ENCODE measurements at regions of chr19 and their contacts with region 1.

Region 1: DNA sequence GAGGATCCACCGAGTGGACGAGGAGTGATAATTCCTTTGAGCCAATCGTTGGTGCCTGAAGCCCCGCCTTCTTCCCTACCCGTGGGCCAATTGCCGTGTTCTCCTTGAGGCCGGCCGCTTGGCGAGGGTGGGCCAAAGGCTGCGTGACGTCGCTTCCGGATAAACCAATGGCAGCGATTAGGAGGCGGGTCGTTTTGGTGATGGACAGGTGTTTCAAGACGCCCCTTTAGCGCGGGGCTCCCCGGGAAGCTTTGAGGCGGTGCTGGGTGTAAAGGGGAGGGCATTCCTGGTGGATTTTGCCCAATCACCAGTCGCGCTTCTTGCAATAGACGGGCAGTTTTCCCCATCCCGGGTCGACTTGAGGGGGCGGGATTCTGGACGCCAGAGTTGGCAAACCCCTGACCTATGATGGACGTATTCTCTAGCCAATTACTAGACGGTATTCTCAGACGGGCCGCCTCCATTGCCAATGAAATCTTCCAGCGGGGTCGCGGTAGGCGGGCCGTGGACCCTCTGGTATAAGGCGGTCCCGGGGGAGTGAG is 310 bp upstream of the PRMT1 start:
- DNase-seq: peak; percentile 100
- ATAC-seq: peak; percentile 79
- H3K4me3 ChIP-seq: peak overlapping the region; percentile 77
- H3K27ac ChIP-seq: peak overlapping the region; percentile 91
- H3K4me1 ChIP-seq: peaks cover 16% of the 10 kb centered on the region
- H3K27me3 ChIP-seq: no peaks in the 10 kb centered on the region
- CTCF ChIP-seq: no peak
- POLR2A ChIP-seq: no peak
- RAD21 ChIP-seq: no peak

Region 2: GRCh38 chr19:49502866-49503581 is 173.7 kb before region 1 on chr19:
- CTCF ChIA-PET with region 1: no interaction called
- POLR2A ChIA-PET with region 1: no interaction called
- dilution Hi-C with region 1: no loop called
- in situ Hi-C with region 1: no loop called
- intact Hi-C with region 1: loop called (anchors 1 kb)
- DNase-seq: peak; percentile 81
- ATAC-seq: peak; percentile 69
- H3K4me3 ChIP-seq: no peak overlapping the region
- H3K27ac ChIP-seq: peak overlapping the region; percentile 33; the same call in 1 of the 2 replicates
- H3K4me1 ChIP-seq: peaks cover 3% of the 10 kb centered on the region; the same call in 1 of the 2 replicates
- H3K27me3 ChIP-seq: no peaks in the 10 kb centered on the region
- CTCF ChIP-seq: peak; percentile 57
- POLR2A ChIP-seq: no peak
- RAD21 ChIP-seq: peak; percentile 65

Region 3: GRCh38 chr19:49570138-49570856 is 106.5 kb before region 1 on chr19:
- CTCF ChIA-PET with region 1: interaction called, 8 read pairs
- POLR2A ChIA-PET with region 1: no interaction called
- dilution Hi-C with region 1: no loop called
- in situ Hi-C with region 1: no loop called
- intact Hi-C with region 1: loop called (anchors 5 kb)
- DNase-seq: peak; percentile 84
- ATAC-seq: peak; percentile 88
- H3K4me3 ChIP-seq: no peak overlapping the region
- H3K27ac ChIP-seq: no peak overlapping the region
- H3K4me1 ChIP-seq: no peaks in the 10 kb centered on the region
- H3K27me3 ChIP-seq: no peaks in the 10 kb centered on the region
- CTCF ChIP-seq: peak; percentile 100
- POLR2A ChIP-seq: 0 out of 2 replicates have a peak, but pooled peaks have one; percentile 39
- RAD21 ChIP-seq: peak; percentile 94

Region 4: GRCh38 chr19:49590071-49590970 is 86.4 kb before region 1 on chr19:
- CTCF ChIA-PET with region 1: no interaction called
- POLR2A ChIA-PET with region 1: no interaction called
- dilution Hi-C with region 1: no loop called
- in situ Hi-C with region 1: no loop called
- intact Hi-C with region 1: loop called (anchors 5 kb)
- DNase-seq: peak; percentile 95
- ATAC-seq: peak; percentile 85
- H3K4me3 ChIP-seq: peak overlapping the region; percentile 97
- H3K27ac ChIP-seq: peak overlapping the region; percentile 91
- H3K4me1 ChIP-seq: peaks cover 7% of the 10 kb centered on the region; the same call in 1 of the 2 replicates
- H3K27me3 ChIP-seq: no peaks in the 10 kb centered on the region
- CTCF ChIP-seq: peak; percentile 10; the same call in 1 of the 2 replicates
- POLR2A ChIP-seq: peak; percentile 72
- RAD21 ChIP-seq: no peak; the same call in 1 of the 2 replicates

Region 5: DNA sequence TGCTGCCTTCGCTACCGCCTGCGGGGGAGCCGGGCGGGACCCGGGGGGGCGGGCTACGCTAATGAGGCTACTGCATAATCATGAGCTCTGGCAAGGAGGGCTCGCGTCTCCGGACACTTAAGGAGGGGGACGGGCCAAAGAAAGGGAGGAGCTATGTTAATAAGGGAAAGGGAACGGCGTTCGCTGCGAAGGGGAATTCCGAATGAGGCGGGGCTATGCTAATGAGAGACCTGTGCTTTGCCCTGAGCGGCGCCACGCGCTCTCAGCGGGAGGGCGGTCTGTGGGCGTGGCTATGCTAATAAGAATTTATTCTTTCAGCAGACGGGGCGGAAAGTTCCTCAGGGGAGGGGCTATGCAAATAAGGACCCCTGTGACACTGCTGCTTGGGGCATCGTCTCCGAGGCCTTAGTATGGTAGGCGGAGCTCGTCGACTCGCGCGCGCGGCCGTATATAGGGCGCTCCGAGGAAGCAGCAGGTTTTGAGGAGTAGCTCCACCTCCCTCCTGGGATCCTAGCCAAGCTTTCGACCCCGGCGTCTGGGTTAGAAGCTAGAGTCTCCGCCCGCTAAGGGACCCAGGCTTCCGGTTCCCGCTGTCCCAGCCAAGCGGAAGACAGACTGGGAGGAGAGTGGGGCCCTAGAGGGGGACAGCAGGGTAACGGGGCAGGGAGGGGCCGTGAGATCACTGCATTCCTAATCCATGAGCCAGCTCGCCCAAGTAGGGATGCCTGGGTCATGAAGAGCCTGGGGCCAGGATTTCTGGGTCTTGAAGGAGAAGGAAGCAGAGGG is 36.5 kb before region 1 on chr19 and contains the start of gene RRAS:
- CTCF ChIA-PET with region 1: interaction called, 4 read pairs
- POLR2A ChIA-PET with region 1: interaction called, 7 read pairs
- dilution Hi-C with region 1: no loop called
- in situ Hi-C with region 1: no loop called
- intact Hi-C with region 1: loop called (anchors 2 kb)
- DNase-seq: peak; percentile 100
- ATAC-seq: peak; percentile 69
- H3K4me3 ChIP-seq: peak within 1 kb of the TSS; percentile 65
- H3K27ac ChIP-seq: peak within 1 kb of the TSS; percentile 99
- H3K4me1 ChIP-seq: peaks cover 7% of the 10 kb centered on the region
- H3K27me3 ChIP-seq: no peaks in the 10 kb centered on the region
- CTCF ChIP-seq: no peak
- POLR2A ChIP-seq: no peak; the same call in none of the 2 replicates
- RAD21 ChIP-seq: no peak
- total RNA-seq, gene RRAS: 50.2 and 50.5 TPM in 2 replicates

Region 6: DNA sequence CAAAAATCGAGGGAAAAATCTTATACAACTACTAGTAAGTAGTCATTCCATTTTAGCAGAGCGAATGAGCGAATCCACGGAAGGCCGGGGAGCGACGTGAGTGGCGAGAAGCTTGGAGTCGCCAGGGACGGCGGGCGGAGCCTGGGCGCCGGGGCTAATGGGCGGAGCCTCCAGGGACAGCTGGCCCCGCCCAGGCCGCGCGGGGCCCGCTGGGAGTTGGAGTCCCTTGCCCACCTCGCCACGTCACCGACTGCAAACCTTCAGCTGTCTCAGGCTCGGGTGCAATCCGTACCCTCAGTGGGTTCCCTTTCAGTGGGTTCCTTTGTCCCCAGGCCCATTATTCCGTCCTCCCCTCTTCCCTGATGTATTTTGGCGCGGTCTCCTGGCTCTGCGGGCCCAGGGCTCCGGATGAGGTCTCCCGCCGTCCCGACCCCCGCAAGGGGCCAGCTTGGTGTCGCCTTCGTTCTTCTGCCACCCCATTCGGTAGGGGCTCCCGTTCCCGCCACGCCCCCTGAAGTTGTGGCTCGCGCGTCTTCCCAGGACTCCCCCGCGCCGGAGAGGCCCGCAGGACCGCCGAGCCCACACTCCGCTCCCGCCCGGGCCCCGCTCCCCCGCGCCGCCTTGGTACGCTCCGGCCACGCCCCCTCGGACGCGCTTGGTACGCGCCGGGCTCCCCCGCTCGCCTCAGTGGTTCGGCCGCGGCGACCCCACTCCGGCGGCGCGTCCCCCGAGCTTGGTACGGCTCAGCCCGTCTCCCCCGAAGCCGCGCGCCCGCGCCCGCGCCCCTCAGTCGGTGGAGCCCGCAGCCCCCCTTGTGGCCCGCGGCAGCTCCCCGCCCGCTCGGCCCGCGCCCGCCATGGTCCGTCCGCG is 173.9 kb after region 1 on chr19 and contains the start of gene PTOV1:
- CTCF ChIA-PET with region 1: no interaction called
- POLR2A ChIA-PET with region 1: no interaction called
- dilution Hi-C with region 1: no loop called
- in situ Hi-C with region 1: loop called (anchors 10 kb)
- intact Hi-C with region 1: no loop called
- DNase-seq: peak; percentile 91
- ATAC-seq: peak; percentile 85
- H3K4me3 ChIP-seq: peak within 1 kb of the TSS; percentile 60
- H3K27ac ChIP-seq: peak within 1 kb of the TSS; percentile 94
- H3K4me1 ChIP-seq: peaks cover 16% of the 10 kb centered on the region
- H3K27me3 ChIP-seq: no peaks in the 10 kb centered on the region
- CTCF ChIP-seq: no peak
- POLR2A ChIP-seq: peak; percentile 84
- RAD21 ChIP-seq: no peak
- total RNA-seq, gene PTOV1: 34.4 and 36.1 TPM in 2 replicates